Heart right ventricle (tissue), 16 donors: ENCODE measurements at regions of chr2 and their contacts with region 1.

Region 1: DNA sequence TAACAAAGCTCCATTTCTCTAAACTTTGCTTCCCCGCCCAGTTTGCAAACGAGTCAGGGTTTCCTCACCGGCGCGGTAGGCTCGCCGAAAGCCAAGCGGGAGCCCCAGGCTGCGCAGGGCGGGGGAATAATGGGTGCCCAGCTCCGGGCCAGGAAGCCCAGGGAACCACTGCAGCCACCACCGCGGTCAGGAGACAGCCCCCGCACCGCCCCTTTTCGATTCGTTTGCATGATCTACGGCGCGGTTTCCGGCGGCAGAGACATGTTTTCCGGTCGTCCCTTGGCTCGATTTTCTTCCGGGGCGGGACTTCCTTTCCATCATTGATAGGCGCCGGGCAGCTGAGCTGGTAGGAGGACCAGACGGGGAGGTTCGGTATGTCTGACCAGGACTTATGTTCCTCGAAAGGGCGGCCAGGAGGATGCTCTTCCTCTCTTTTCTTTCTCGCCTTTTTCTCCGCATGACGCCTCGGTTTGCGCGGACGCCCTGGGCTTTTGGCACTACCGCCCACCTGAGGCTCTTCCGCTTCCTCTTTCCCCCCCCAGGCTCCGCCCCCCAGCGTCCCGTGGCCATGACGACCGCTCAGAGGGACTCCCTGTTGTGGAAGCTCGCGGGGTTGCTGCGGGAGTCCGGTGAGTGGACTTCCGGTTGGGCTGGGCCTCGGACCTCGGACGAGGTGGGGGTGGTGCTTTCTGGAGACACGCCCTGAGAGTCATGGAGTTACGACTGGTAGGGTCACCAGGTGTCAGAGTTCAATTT is at the start of gene STK11IP:
- DNase-seq: peak; percentile 94 to 98
- ATAC-seq: peak; percentile 96 to 99 (median 98)
- H3K4me3 ChIP-seq: peak within 1 kb of the TSS; percentile 46 to 80 (median 70)
- H3K27ac ChIP-seq: peak within 1 kb of the TSS; percentile 87 to 97 (median 94)
- H3K4me1 ChIP-seq: peaks cover 0 to 29% (median 10%) of the 10 kb centered on the region in 9 donors
- H3K27me3 ChIP-seq: no peaks in the 10 kb centered on the region
- CTCF ChIP-seq: no peak
- total RNA-seq, gene STK11IP: 7.2 to 18.2 (median 12.9) TPM

Region 2: DNA sequence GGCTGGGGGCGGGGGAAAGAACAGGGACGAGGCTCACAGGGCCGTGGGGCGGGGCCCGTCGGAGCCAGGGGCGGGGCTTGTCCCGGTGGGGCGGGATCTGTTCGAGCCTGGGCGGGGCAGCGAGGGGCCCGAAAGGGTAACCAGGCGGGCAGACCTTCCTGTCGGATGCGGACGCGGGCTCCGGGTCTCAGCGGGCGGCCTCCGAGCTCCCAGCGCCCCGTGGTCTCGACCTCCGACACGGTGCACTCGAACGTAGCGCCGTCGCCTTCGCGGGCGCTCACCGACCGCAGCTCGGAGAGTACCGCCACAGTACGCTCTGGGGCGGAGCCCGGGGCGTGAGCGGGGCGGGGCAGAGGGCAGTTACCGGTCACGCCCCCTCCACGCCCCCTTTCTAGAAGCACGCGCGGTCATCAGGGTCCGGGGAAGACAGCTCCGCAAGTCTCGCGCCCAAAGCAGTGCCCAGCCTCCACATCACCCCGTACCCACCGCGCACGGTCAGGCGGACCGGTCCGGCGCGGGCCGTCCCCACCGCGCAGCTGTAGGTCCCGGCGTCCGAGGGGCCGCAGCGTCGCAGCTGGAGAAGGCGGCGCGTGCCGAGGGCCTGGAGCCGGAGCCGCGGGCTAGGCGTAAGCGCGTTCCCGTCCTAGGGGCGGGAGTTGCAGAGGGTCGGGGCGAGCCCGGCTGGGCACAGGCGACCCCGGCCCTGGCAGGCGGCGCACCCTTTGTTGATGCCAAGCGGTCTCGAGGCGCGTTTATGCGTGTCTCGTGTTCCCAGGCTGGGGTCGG is 45.2 kb before region 1 on chr2:
- intact Hi-C with region 1: loop called in 2 of 10 experiments (anchors 5 kb)
- DNase-seq: peak; percentile 84 to 87
- ATAC-seq: peak; percentile 84 to 93 (median 90)
- H3K4me3 ChIP-seq: peak overlapping the region; percentile 3 to 72 (median 58)
- H3K27ac ChIP-seq: peak overlapping the region in 4 of 10 donors; percentile 15 to 53 (median 47)
- H3K4me1 ChIP-seq: peaks cover 12 to 22% (median 17%) of the 10 kb centered on the region in 9 donors
- H3K27me3 ChIP-seq: peaks cover 0 to 50% (median 25%) of the 10 kb centered on the region in 7 donors
- CTCF ChIP-seq: no peak